ENCODE measurements at regions of chr7 and their contacts with region 1.

Region 1: GRCh38 chr7:41696314-41696916 is 6.5 kb downstream of the INHBA start:
- DNase-seq: peak; percentile 85
- H3K4me3 ChIP-seq: peak overlapping the region; percentile 18
- H3K27ac ChIP-seq: no peak overlapping the region
- H3K4me1 ChIP-seq: peaks cover 18% of the 10 kb centered on the region
- H3K27me3 ChIP-seq: peaks cover 3% of the 10 kb centered on the region
- CTCF ChIP-seq: peak; percentile 91

Region 2: DNA sequence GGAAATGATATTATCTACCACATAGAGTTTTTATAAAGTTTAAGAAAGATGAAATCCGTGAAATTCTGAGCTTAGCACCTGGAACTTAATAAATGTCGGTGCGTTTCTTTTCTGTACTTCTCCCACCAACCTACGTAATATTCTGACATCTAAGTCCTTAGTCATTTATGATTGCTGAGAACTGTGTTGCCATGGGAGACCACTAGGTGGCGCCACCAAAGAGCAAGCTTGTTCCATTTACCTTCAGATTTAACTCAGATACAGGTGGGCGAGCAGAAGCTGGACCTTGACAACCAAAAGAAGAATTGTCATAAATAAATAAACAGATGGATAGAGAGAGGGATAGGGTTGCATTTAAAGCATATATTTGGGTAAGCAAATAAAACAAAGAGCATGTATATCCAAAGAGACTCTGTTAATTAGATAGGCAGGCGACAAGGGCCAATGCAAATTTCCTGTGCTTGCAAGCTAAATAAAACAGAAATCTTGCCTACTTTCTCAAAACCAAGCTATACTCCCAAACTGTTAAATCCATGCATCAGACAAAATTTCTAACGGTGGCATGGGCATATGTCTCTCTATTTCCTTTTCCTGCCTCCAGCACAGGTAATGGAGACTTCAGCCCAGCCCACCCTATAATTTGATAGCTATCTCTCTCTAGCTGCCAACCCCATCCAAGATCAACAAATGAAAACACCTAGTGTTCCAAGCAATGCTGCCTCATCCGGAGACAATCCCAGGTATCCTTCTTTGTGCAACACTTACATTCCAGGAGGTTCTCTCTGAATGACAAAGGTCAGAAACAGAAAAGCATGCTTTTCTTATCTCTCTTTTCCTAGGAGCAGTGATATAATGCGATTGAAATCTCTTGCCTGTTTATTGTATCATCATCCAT is 693.1 kb before region 1 on chr7:
- CTCF ChIA-PET with region 1: interaction called, 13 read pairs
- POLR2A ChIA-PET with region 1: no interaction called
- intact Hi-C with region 1: loop called (anchors 2 kb)
- DNase-seq: peak; percentile 57
- H3K4me3 ChIP-seq: no peak overlapping the region
- H3K27ac ChIP-seq: no peak overlapping the region
- H3K4me1 ChIP-seq: no peaks in the 10 kb centered on the region
- H3K27me3 ChIP-seq: no peaks in the 10 kb centered on the region
- CTCF ChIP-seq: peak; percentile 97

Region 3: DNA sequence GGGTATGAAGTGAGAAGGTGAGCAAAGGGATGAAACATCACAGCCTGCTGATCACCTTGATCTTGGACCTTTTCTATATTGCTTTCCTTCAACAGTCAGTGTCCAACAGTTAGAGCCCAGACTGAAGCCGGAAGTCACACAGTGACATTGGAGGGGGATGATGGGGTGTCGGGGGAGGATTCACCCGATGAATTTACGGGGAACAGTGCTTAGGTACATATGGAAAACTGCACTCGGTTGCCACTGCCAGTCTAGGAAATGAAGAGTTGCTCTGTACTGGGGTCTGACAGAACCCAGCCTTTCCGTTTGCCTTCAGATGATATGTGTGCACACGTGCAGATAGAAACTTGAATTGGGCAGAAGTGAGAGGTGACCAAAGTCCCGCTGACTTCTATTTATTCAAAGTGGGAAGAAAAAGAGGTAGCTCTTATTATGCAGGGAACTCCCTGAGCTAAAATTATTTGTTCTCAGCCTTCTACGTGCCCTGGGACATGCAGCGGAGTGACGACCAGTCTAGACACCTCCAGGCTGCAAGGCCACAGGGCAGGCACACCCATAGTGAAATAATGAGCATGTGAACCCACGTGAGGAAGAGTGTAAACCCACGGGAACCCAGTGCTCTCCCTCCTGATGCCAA is 113.6 kb after region 1 on chr7:
- CTCF ChIA-PET with region 1: interaction called, 13 read pairs
- POLR2A ChIA-PET with region 1: no interaction called
- intact Hi-C with region 1: no loop called
- DNase-seq: no peak
- H3K4me3 ChIP-seq: no peak overlapping the region
- H3K27ac ChIP-seq: no peak overlapping the region
- H3K4me1 ChIP-seq: no peaks in the 10 kb centered on the region
- H3K27me3 ChIP-seq: no peaks in the 10 kb centered on the region
- CTCF ChIP-seq: no peak

Region 4: GRCh38 chr7:41820111-41820671 is 123.8 kb after region 1 on chr7:
- CTCF ChIA-PET with region 1: no interaction called
- POLR2A ChIA-PET with region 1: no interaction called
- intact Hi-C with region 1: no loop called
- DNase-seq: no peak
- H3K4me3 ChIP-seq: no peak overlapping the region
- H3K27ac ChIP-seq: peak overlapping the region; percentile 97
- H3K4me1 ChIP-seq: peaks cover 57% of the 10 kb centered on the region
- H3K27me3 ChIP-seq: no peaks in the 10 kb centered on the region
- CTCF ChIP-seq: no peak